ENCODE measurements at regions of chr4 and their contacts with region 1.

Region 1: DNA sequence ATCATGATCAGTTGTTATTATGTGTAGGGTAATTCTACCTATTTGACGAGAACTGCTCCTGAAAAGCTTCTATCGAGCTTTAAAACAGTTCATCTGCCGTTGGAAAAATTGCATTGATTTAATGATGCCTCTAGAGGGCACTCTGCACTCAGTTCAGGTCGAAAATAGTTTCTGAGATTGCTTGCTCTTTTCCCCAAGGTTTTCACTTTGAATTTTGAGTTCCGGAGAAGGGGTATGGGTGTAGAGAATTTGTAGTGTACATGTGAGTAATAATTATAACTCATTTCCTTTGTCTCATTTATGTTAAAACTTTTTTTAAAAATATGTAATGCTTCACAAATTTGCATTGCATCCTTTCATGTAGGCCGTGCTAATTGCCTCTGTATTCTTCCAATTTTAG is 28.4 kb upstream of the TNIP3 start:
- DNase-seq: no peak
- H3K4me3 Mint-ChIP-seq: peak overlapping the region; percentile 45
- H3K27ac Mint-ChIP-seq: peak overlapping the region; percentile 20
- H3K4me1 Mint-ChIP-seq: peaks cover 52% of the 10 kb centered on the region
- H3K27me3 Mint-ChIP-seq: peaks cover 4% of the 10 kb centered on the region

Region 2: GRCh38 chr4:120156120-120156718 is 1036.3 kb before region 1 on chr4:
- intact Hi-C with region 1: loop called (anchors 2 kb)
- DNase-seq: no peak
- H3K4me3 Mint-ChIP-seq: no peak overlapping the region
- H3K27ac Mint-ChIP-seq: no peak overlapping the region
- H3K4me1 Mint-ChIP-seq: no peaks in the 10 kb centered on the region
- H3K27me3 Mint-ChIP-seq: peaks cover 7% of the 10 kb centered on the region

Region 3: GRCh38 chr4:120940547-120940946 is 251.9 kb before region 1 on chr4:
- intact Hi-C with region 1: no loop called
- DNase-seq: no peak
- H3K4me3 Mint-ChIP-seq: no peak overlapping the region
- H3K27ac Mint-ChIP-seq: no peak overlapping the region
- H3K4me1 Mint-ChIP-seq: no peaks in the 10 kb centered on the region
- H3K27me3 Mint-ChIP-seq: peaks cover 6% of the 10 kb centered on the region

Region 4: GRCh38 chr4:121112530-121112929 is 80.0 kb before region 1 on chr4:
- intact Hi-C with region 1: loop called (anchors 1 kb)
- DNase-seq: no peak
- H3K4me3 Mint-ChIP-seq: no peak overlapping the region
- H3K27ac Mint-ChIP-seq: no peak overlapping the region
- H3K4me1 Mint-ChIP-seq: peaks cover 21% of the 10 kb centered on the region
- H3K27me3 Mint-ChIP-seq: peaks cover 11% of the 10 kb centered on the region

Region 5: DNA sequence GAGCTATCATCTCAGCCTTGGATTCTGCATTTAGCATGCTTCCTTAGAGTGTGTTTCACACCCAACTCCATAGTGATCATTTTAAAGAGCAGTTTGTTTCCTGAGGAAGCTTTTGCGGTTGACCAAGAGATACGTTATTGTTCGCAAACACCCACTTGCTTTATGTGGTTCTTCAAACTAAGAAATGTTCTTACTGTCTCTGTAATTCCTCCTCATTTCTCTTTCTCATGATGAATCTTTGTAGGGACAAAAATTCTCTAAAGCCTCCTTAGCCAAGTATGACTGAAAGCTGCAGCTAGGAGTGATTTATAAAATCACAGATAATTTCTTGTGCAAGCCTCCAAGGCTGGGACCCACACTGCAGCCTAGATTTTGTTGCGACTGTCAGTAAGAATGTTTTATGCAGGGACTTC is 38.4 kb before region 1 on chr4:
- intact Hi-C with region 1: loop called (anchors 1 kb)
- DNase-seq: peak; percentile 39
- H3K4me3 Mint-ChIP-seq: peak overlapping the region; percentile 56
- H3K27ac Mint-ChIP-seq: peak overlapping the region; percentile 73
- H3K4me1 Mint-ChIP-seq: peaks cover 74% of the 10 kb centered on the region
- H3K27me3 Mint-ChIP-seq: peaks cover 9% of the 10 kb centered on the region

Region 6: DNA sequence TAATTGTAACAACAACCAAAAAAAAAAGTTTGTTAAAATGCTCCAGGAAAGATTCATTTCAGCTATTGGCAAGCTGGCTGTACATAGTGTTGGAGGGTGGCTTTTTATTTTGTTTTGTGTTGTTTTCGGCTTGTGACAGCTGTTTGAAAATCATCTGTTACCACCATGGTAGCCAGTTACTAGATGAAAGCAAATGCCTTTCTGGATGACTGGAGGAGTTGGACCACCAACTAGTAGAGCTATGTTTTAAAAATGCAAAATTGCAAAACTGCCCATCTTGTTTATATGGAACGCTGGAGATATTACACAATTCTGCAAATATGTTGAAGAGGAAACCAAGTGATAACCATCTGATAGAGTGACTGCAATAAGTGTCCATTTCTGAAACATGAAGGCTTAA is 24.9 kb after region 1 on chr4:
- intact Hi-C with region 1: loop called (anchors 1 kb)
- DNase-seq: no peak
- H3K4me3 Mint-ChIP-seq: no peak overlapping the region
- H3K27ac Mint-ChIP-seq: no peak overlapping the region
- H3K4me1 Mint-ChIP-seq: peaks cover 31% of the 10 kb centered on the region
- H3K27me3 Mint-ChIP-seq: peaks cover 4% of the 10 kb centered on the region

Region 7: DNA sequence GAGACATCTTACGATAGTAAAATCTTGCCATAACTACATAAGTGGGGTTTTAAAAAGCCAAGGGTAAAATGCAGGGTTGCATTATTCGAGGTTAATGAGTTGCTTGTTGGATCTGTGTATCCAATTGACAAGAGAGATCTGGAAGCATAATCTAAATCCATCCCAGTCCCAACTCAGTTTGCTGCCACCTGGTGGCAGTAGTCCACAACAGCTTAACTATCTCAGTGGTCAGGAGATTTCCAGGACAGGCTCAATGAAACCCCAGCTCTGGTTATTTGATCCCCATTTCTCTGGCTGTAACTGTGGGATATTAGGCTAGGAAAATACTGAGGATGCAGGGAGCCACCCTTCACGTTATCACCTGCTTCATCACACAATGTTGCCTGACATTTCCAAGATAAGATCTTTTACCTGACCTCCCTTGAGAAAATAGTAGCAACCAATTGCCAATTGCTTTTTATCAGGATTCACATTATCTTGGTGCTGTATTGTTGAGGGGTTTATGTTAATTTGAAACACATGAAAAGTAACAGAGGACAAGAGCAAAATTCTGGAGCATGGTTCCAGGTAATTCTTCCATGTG is 59.8 kb after region 1 on chr4:
- intact Hi-C with region 1: loop called (anchors 1 kb)
- DNase-seq: peak; percentile 21
- H3K4me3 Mint-ChIP-seq: no peak overlapping the region
- H3K27ac Mint-ChIP-seq: no peak overlapping the region
- H3K4me1 Mint-ChIP-seq: peaks cover 66% of the 10 kb centered on the region
- H3K27me3 Mint-ChIP-seq: peaks cover 6% of the 10 kb centered on the region

Region 8: GRCh38 chr4:121283319-121283718 is 90.8 kb after region 1 on chr4:
- intact Hi-C with region 1: no loop called
- DNase-seq: no peak
- H3K4me3 Mint-ChIP-seq: no peak overlapping the region
- H3K27ac Mint-ChIP-seq: no peak overlapping the region
- H3K4me1 Mint-ChIP-seq: peaks cover 6% of the 10 kb centered on the region
- H3K27me3 Mint-ChIP-seq: no peaks in the 10 kb centered on the region

Region 9: GRCh38 chr4:121370729-121371325 is 178.3 kb after region 1 on chr4:
- intact Hi-C with region 1: loop called (anchors 5 kb)
- DNase-seq: no peak
- H3K4me3 Mint-ChIP-seq: no peak overlapping the region
- H3K27ac Mint-ChIP-seq: no peak overlapping the region
- H3K4me1 Mint-ChIP-seq: no peaks in the 10 kb centered on the region
- H3K27me3 Mint-ChIP-seq: peaks cover 10% of the 10 kb centered on the region